BJ (cell line): ENCODE measurements at regions of chrX and their contacts with region 1.

Region 1: GRCh38 chrX:8815464-8816065 is 14.4 kb upstream of the FAM9A start:
- DNase-seq: no peak
- H3K4me3 ChIP-seq: no peak overlapping the region
- H3K27me3 ChIP-seq: no peaks in the 10 kb centered on the region
- CTCF ChIP-seq: peak; percentile 68

Region 2: DNA sequence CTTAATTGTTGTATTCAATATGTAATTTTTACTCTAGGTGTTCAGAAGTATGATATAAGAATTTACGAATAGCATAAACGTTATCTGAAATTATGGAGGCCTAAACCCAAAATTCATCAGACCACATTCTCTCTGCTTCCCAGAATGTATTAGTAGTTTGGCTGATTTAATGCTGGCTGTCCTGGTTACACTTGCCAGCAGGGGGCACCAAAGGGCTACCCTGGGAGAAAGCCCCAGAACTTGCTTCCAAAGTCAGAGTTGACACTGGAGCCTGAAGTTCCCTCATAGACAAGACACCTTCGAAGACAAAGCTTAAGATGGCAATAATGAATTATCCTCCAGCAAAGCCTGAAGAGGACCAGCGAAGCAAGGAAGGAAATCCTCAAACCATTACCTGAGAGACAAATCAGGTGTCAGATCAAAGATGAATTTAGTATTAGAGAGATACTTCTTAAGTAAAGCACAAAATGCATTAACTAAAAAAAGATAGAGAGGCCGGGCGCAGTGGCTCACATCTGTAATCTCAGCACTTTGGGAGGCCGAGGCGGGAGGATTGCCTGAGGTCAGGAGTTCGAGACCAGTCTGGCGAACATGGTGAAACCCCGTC is 72.3 kb before region 1 on chrX:
- CTCF ChIA-PET with region 1: interaction called, 18 read pairs
- POLR2A ChIA-PET with region 1: no interaction called
- DNase-seq: no peak
- H3K4me3 ChIP-seq: no peak overlapping the region
- H3K27me3 ChIP-seq: no peaks in the 10 kb centered on the region
- CTCF ChIP-seq: peak; percentile 69

Region 3: GRCh38 chrX:8748855-8749254 is 66.7 kb before region 1 on chrX:
- CTCF ChIA-PET with region 1: interaction called, 43 read pairs
- POLR2A ChIA-PET with region 1: no interaction called
- DNase-seq: no peak
- H3K4me3 ChIP-seq: no peak overlapping the region
- H3K27me3 ChIP-seq: no peaks in the 10 kb centered on the region
- CTCF ChIP-seq: peak; percentile 68

Region 4: GRCh38 chrX:9258421-9259104 is 443.0 kb after region 1 on chrX:
- CTCF ChIA-PET with region 1: no interaction called
- POLR2A ChIA-PET with region 1: no interaction called
- DNase-seq: no peak
- H3K4me3 ChIP-seq: no peak overlapping the region
- H3K27me3 ChIP-seq: no peaks in the 10 kb centered on the region; the same call in 1 of the 2 replicates
- CTCF ChIP-seq: no peak

Region 5: GRCh38 chrX:9708904-9709553 is 893.5 kb after region 1 on chrX:
- CTCF ChIA-PET with region 1: interaction called, 10 read pairs
- POLR2A ChIA-PET with region 1: no interaction called
- DNase-seq: no peak
- H3K4me3 ChIP-seq: no peak overlapping the region
- H3K27me3 ChIP-seq: no peaks in the 10 kb centered on the region
- CTCF ChIP-seq: peak; percentile 79